ENCODE measurements at regions of chr12 and their contacts with region 1.

Region 1: GRCh38 chr12:43444940-43445564 is 107.0 kb downstream of the ADAMTS20 start:
- DNase-seq: peak; percentile 76
- H3K4me3 ChIP-seq: no peak overlapping the region
- H3K27ac ChIP-seq: no peak overlapping the region
- H3K4me1 ChIP-seq: no peaks in the 10 kb centered on the region
- H3K27me3 ChIP-seq: peaks cover 0 to 2% of the 10 kb centered on the region in 2 experiments
- CTCF ChIP-seq: peak; percentile 64 to 74
- POLR2A ChIP-seq: no peak

Region 2: GRCh38 chr12:43325786-43326185 is 119.3 kb before region 1 on chr12:
- CTCF ChIA-PET with region 1: no interaction called
- POLR2A ChIA-PET with region 1: no interaction called
- dilution Hi-C with region 1: no loop called
- intact Hi-C with region 1: no loop called
- DNase-seq: no peak
- H3K4me3 ChIP-seq: no peak overlapping the region
- H3K27ac ChIP-seq: no peak overlapping the region
- H3K4me1 ChIP-seq: no peaks in the 10 kb centered on the region
- H3K27me3 ChIP-seq: no peaks in the 10 kb centered on the region
- CTCF ChIP-seq: no peak
- POLR2A ChIP-seq: no peak

Region 3: GRCh38 chr12:43428088-43428600 is 16.9 kb before region 1 on chr12:
- CTCF ChIA-PET with region 1: interaction called, 23 read pairs
- POLR2A ChIA-PET with region 1: no interaction called
- dilution Hi-C with region 1: no loop called
- intact Hi-C with region 1: no loop called
- DNase-seq: no peak
- H3K4me3 ChIP-seq: no peak overlapping the region
- H3K27ac ChIP-seq: no peak overlapping the region
- H3K4me1 ChIP-seq: no peaks in the 10 kb centered on the region
- H3K27me3 ChIP-seq: no peaks in the 10 kb centered on the region
- CTCF ChIP-seq: no peak
- POLR2A ChIP-seq: no peak

Region 4: GRCh38 chr12:43434614-43435013 is 10.4 kb before region 1 on chr12:
- CTCF ChIA-PET with region 1: interaction called, 23 read pairs
- POLR2A ChIA-PET with region 1: no interaction called
- dilution Hi-C with region 1: no loop called
- intact Hi-C with region 1: no loop called
- DNase-seq: no peak
- H3K4me3 ChIP-seq: no peak overlapping the region
- H3K27ac ChIP-seq: no peak overlapping the region
- H3K4me1 ChIP-seq: no peaks in the 10 kb centered on the region
- H3K27me3 ChIP-seq: no peaks in the 10 kb centered on the region
- CTCF ChIP-seq: no peak
- POLR2A ChIP-seq: no peak

Region 5: GRCh38 chr12:43459285-43459684 is 14.2 kb after region 1 on chr12:
- CTCF ChIA-PET with region 1: interaction called, 19 read pairs
- POLR2A ChIA-PET with region 1: no interaction called
- dilution Hi-C with region 1: no loop called
- intact Hi-C with region 1: no loop called
- DNase-seq: no peak
- H3K4me3 ChIP-seq: no peak overlapping the region
- H3K27ac ChIP-seq: no peak overlapping the region
- H3K4me1 ChIP-seq: no peaks in the 10 kb centered on the region
- H3K27me3 ChIP-seq: no peaks in the 10 kb centered on the region
- CTCF ChIP-seq: no peak
- POLR2A ChIP-seq: no peak

Region 6: DNA sequence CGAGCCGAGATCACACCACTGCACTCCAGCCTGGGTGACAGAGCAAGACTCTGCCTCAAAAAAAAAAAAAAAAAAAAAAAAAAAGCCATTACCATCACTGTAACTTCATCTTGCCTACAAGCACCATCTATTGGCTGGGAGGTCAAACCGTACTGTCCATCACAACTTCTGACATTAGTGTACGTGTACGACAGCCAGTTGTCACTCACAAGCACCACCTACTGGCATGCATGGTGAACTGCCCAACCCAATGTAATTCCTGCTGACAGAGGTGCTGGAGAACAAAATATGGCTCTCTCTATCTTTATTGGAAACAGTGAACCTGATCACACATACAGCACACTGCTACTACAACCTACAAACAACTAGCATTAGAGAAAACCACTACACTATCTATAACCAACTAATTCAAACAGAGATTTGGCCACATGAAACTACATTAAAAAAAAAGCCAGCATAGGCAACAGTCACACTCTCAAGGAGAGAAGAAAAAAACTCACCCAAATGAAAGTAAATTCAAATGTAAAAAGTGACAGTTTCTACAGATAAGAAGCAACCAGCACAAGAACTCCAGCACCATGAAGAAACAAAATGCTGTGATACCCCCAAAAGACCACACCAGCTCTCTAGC is 231.2 kb after region 1 on chr12:
- CTCF ChIA-PET with region 1: no interaction called
- POLR2A ChIA-PET with region 1: no interaction called
- dilution Hi-C with region 1: no loop called
- intact Hi-C with region 1: loop called (anchors 2 kb)
- DNase-seq: peak; percentile 16
- H3K4me3 ChIP-seq: no peak overlapping the region
- H3K27ac ChIP-seq: no peak overlapping the region
- H3K4me1 ChIP-seq: no peaks in the 10 kb centered on the region
- H3K27me3 ChIP-seq: peaks cover 1 to 17% of the 10 kb centered on the region in 2 experiments
- CTCF ChIP-seq: peak; percentile 57 to 68
- POLR2A ChIP-seq: no peak

Region 7: GRCh38 chr12:43728117-43728516 is 283.1 kb after region 1 on chr12:
- CTCF ChIA-PET with region 1: interaction called, 3 read pairs
- POLR2A ChIA-PET with region 1: no interaction called
- dilution Hi-C with region 1: no loop called
- intact Hi-C with region 1: loop called (anchors 1 kb)
- DNase-seq: peak; percentile 4
- H3K4me3 ChIP-seq: no peak overlapping the region
- H3K27ac ChIP-seq: no peak overlapping the region
- H3K4me1 ChIP-seq: no peaks in the 10 kb centered on the region
- H3K27me3 ChIP-seq: no peaks in the 10 kb centered on the region
- CTCF ChIP-seq: no peak
- POLR2A ChIP-seq: no peak

Region 8: GRCh38 chr12:43882578-43883178 is 437.6 kb after region 1 on chr12:
- CTCF ChIA-PET with region 1: interaction called, 137 read pairs
- POLR2A ChIA-PET with region 1: no interaction called
- dilution Hi-C with region 1: no loop called
- intact Hi-C with region 1: loop called (anchors 1 kb)
- DNase-seq: peak; percentile 65
- H3K4me3 ChIP-seq: no peak overlapping the region
- H3K27ac ChIP-seq: no peak overlapping the region
- H3K4me1 ChIP-seq: no peaks in the 10 kb centered on the region
- H3K27me3 ChIP-seq: no peaks in the 10 kb centered on the region
- CTCF ChIP-seq: peak; percentile 48 to 58
- POLR2A ChIP-seq: no peak